ENCODE measurements at regions of chr11 and their contacts with region 1.

Region 1: GRCh38 chr11:57456960-57457642 is 3.2 kb upstream of the RTN4RL2 start:
- DNase-seq: no peak
- H3K4me3 ChIP-seq: peak overlapping the region; percentile 25; the same call in 1 of the 2 replicates
- CTCF ChIP-seq: peak; percentile 98

Region 2: GRCh38 chr11:57432714-57433163 is 24.4 kb before region 1 on chr11:
- CTCF ChIA-PET with region 1: interaction called, 134 read pairs
- POLR2A ChIA-PET with region 1: no interaction called
- DNase-seq: peak; percentile 47
- H3K4me3 ChIP-seq: no peak overlapping the region
- CTCF ChIP-seq: no peak

Region 3: GRCh38 chr11:57480409-57481137 is 23.5 kb after region 1 on chr11:
- CTCF ChIA-PET with region 1: interaction called, 140 read pairs
- POLR2A ChIA-PET with region 1: no interaction called
- DNase-seq: no peak
- H3K4me3 ChIP-seq: no peak overlapping the region
- CTCF ChIP-seq: peak; percentile 83

Region 4: DNA sequence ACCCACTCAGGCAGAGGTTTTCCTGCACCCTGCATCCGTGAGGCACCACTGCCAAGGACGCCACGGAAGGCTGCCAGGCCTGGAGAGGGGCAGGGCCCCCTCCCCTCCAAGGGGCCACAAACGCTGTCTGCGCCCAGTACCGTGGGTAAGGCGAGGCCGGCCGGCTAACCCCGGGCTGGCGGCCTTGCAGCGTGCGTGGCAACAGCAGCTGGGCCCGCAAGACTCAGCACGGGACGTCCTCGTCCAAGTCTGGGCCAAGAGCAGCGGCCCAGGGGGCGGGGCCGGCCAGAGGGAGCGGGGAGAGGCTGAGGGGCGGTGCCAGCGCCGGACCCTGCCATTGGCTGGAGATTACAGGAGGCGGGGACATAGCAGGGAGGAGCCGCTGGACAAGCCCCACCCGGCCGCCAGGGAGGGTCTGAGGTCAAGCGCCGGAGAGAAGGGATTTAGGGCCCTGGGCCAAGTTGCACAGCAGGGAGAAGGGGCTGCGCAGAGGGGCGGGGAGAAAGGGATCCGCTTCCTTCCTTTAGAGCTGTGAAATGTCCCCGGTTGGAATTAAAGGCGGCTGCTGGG is 42.4 kb after region 1 on chr11:
- CTCF ChIA-PET with region 1: interaction called, 34 read pairs
- POLR2A ChIA-PET with region 1: no interaction called
- DNase-seq: no peak
- H3K4me3 ChIP-seq: peak overlapping the region; percentile 45
- CTCF ChIP-seq: no peak

Region 5: DNA sequence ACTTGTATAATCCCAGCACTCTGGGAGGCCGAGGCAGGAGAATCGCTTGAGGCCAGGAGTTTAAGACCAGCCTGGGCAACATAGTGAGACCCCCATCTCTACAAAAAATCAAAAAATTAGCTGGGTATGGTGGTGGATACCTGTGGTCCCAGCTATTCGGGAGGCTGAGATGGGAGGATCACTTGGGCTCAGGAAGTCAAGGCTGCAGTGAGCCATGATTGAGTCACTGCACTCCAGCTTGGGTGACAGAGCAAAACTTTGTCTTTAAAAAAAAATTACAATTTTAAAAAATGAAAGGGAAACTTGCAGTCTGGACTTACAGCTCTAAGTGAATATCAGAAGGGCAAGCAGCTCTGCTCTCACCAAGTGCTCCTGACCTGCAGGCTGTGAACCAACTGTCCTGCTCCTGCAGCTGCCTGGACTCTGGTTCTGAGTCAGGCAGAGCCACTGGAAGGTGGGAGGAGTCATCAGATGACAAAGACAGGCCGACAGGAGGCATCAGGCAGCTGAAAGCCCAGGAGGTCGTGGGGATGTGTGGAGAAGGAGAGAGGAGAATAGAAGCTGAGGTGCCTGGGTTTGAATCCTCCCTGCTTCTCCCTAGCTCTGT is 89.9 kb after region 1 on chr11:
- CTCF ChIA-PET with region 1: interaction called, 12 read pairs
- POLR2A ChIA-PET with region 1: no interaction called
- DNase-seq: no peak
- H3K4me3 ChIP-seq: no peak overlapping the region
- CTCF ChIP-seq: peak; percentile 22

Measured in AG04449 (cell line).